BJ (cell line): ENCODE measurements at regions of chr2 and their contacts with region 1.

Region 1: DNA sequence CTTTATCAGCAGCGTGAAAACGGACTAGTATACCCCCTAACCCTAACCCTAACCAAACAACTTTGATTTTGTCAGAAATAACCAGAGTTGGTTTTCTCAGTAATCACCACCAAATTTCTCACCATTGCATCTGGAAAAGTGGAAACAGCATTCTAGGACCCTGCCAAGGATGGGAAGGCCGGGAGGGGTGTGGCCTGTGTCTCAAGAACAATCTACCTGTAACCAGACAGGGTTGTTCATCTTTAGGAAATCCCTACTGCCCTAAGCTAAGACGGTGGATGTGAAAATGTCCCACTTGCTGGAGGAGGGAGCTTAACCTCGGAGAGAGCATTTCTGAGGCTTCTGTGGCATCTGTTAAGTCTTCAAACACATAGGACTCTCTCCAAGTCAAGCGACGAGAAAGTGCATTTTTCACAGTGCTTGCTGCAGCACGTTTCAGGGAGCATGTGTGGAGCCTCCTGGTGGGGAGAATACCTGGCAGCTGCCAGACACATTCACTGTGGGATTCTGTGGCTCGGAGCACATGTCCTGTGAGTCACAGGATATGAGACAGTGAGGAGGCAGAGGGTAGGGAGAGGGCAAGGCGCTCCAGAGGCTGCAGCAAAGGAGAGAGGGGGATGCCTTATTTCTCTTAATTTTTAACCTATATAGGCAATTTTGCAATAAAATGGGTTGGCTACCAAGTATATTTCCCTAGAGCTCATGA is 207.5 kb downstream of the SPP2 start:
- DNase-seq: peak; percentile 89
- H3K4me3 ChIP-seq: no peak overlapping the region
- H3K27me3 ChIP-seq: peaks cover 7% of the 10 kb centered on the region
- CTCF ChIP-seq: peak; percentile 71

Region 2: GRCh38 chr2:233912691-233913423 is 345.2 kb before region 1 on chr2:
- CTCF ChIA-PET with region 1: no interaction called
- POLR2A ChIA-PET with region 1: no interaction called
- DNase-seq: no peak
- H3K4me3 ChIP-seq: no peak overlapping the region
- H3K27me3 ChIP-seq: no peaks in the 10 kb centered on the region
- CTCF ChIP-seq: no peak

Region 3: DNA sequence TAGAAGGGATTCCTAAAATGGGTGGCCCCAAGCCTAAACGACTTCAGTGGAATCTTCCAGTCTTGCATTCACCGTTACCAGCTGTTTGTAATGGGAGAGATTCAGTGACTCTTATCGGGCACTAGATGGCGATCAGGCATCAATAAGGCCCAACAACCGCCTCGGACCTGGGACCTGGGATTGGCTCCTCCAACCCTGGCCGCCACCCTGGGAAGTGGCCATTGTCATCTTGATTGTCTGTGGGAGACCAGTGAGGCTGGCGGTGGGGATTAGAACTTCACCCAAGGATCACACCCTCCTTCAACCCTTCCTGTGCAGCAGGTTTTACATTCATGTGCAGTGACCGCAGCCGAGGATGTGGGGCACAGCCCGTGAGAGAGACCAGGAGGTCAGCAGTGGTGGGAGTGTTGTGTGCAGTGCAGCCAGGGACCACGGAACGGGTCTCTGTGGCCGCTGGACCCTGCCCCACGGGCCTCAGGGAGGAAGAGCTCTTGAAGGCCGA is 122.2 kb before region 1 on chr2:
- CTCF ChIA-PET with region 1: interaction called, 21 read pairs
- POLR2A ChIA-PET with region 1: no interaction called
- DNase-seq: no peak
- H3K4me3 ChIP-seq: no peak overlapping the region
- H3K27me3 ChIP-seq: no peaks in the 10 kb centered on the region
- CTCF ChIP-seq: peak; percentile 83

Region 4: DNA sequence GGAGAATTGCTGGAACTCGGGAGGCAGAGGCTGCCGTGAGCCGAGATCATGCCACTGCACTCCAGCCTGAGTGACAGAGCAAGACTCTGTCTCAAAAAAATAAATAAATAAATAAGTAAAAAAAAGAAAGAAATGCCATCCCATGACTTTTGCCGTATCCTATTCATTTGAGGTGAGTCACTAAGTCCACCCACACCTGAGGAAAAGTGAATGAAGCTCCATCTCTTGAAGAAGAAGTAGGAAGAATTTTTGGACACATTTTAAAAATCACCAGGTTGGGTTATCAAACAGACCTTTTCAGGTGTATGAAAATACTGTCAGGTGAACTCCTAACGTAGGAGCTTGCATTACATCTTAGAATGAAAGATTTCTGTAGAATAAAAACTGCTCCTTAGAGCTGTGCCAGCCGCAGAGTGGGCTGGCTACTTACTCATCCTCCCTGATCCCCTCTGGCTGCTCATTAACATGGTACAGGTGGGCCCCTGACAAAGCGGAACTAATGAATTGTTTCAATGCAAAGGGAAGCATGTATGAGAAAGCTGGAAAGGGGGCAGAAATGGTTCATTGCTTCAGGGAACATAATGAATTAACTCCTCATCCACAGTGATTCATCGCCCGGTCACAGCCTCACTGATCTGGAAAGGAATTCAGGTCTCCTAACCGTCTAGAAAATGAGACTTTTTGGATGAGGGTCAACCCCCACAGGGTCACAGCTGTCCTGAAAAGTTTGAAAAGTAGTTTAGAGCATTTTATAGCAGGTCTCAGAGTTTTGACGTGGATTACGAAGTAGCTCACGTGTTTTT is 16.2 kb before region 1 on chr2:
- CTCF ChIA-PET with region 1: no interaction called
- POLR2A ChIA-PET with region 1: no interaction called
- DNase-seq: peak; percentile 51
- H3K4me3 ChIP-seq: no peak overlapping the region
- H3K27me3 ChIP-seq: no peaks in the 10 kb centered on the region
- CTCF ChIP-seq: no peak